Naive thymus-derived CD4-positive, alpha-beta T cell (primary cell): ENCODE measurements at regions of chr6 and their contacts with region 1.

Region 1: GRCh38 chr6:75601304-75602245 is at the start of gene SENP6:
- DNase-seq: peak; percentile 68 to 81 (median 79)
- ATAC-seq: peak; percentile 80
- H3K4me3 ChIP-seq: peak within 1 kb of the TSS; percentile 87
- H3K4me3 Mint-ChIP-seq: peak within 1 kb of the TSS; percentile 78 to 100 (median 99)
- H3K27ac ChIP-seq: peak within 1 kb of the TSS; percentile 97
- H3K27ac Mint-ChIP-seq: peak within 1 kb of the TSS; percentile 97 to 99 (median 98)
- H3K4me1 ChIP-seq: peaks cover 26 to 37% of the 10 kb centered on the region in 2 donors
- H3K4me1 Mint-ChIP-seq: peaks cover 44 to 80% (median 72%) of the 10 kb centered on the region in 7 donors
- H3K27me3 ChIP-seq: no peaks in the 10 kb centered on the region
- H3K27me3 Mint-ChIP-seq: no peaks in the 10 kb centered on the region
- total RNA-seq, gene SENP6: 77.9 to 132 (median 124) TPM

Region 2: DNA sequence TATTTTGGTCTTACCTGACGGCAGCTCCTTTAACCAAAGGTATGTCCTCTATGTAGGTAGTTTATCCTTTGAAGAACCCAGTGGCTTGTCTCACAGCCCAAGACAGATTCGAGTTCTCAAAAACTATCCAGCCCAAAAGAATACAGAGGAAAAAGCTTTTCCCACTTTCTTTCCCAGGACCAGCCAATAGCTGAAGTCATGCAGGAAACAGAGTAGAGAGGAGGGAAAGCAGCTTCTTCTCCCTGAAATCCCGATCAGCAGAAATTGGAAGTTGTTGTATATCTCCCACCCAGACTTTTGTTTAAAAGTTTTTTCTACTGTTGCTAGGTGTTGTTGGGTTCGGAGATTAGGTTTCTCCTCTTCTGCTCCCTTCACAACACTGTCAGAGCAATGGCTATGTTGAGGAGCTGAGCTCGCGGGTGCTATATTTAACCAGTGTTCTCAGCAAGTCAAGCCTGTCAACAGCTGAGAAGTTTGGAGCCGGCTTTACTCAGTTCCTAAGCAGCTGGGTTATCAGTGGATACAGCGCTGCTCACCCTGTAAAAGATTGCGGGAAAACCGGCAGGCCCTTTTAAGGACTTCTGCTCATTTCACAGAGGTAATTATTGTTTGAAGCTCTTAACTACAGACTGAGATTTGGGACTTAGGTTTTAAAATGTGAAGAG is 108.0 kb before region 1 on chr6 and contains the start of gene FILIP1:
- CTCF ChIA-PET with region 1: no interaction called
- POLR2A ChIA-PET with region 1: no interaction called
- intact Hi-C with region 1: loop called in 1 of 2 experiments (anchors 2 kb)
- DNase-seq: no peak
- ATAC-seq: no peak
- H3K4me3 ChIP-seq: no peak within 1 kb of the TSS
- H3K4me3 Mint-ChIP-seq: no peak within 1 kb of the TSS
- H3K27ac ChIP-seq: no peak within 1 kb of the TSS
- H3K27ac Mint-ChIP-seq: no peak within 1 kb of the TSS
- H3K4me1 ChIP-seq: peaks cover 0 to 12% of the 10 kb centered on the region in 2 donors
- H3K4me1 Mint-ChIP-seq: peaks cover 0 to 14% (median 0%) of the 10 kb centered on the region in 7 donors
- H3K27me3 ChIP-seq: peaks cover 0 to 4% of the 10 kb centered on the region in 2 donors
- H3K27me3 Mint-ChIP-seq: peaks cover 42 to 73% (median 49%) of the 10 kb centered on the region in 5 donors
- total RNA-seq, gene FILIP1: 0.08 TPM in 1 of 5 experiments, not detected in the others

Region 3: GRCh38 chr6:75611702-75612375 is 10.3 kb after region 1 on chr6:
- CTCF ChIA-PET with region 1: no interaction called
- POLR2A ChIA-PET with region 1: interaction called, 4 read pairs
- intact Hi-C with region 1: loop called (anchors 1 kb)
- DNase-seq: peak in 1 of 9 donors; percentile 58
- ATAC-seq: peak; percentile 64
- H3K4me3 ChIP-seq: no peak overlapping the region
- H3K4me3 Mint-ChIP-seq: peak overlapping the region; percentile 0 to 78 (median 53)
- H3K27ac ChIP-seq: no peak overlapping the region
- H3K27ac Mint-ChIP-seq: peak overlapping the region; percentile 5 to 87 (median 65)
- H3K4me1 ChIP-seq: peaks cover 32 to 71% of the 10 kb centered on the region in 2 donors
- H3K4me1 Mint-ChIP-seq: peaks cover 63 to 97% (median 90%) of the 10 kb centered on the region in 7 donors
- H3K27me3 ChIP-seq: no peaks in the 10 kb centered on the region
- H3K27me3 Mint-ChIP-seq: no peaks in the 10 kb centered on the region